ENCODE measurements at regions of chr7 and their contacts with region 1.

Region 1: GRCh38 chr7:332646-333392 is 42.8 kb downstream of the FOXL3 start:
- DNase-seq: peak; percentile 85
- ATAC-seq: peak; percentile 91 to 96

Region 2: DNA sequence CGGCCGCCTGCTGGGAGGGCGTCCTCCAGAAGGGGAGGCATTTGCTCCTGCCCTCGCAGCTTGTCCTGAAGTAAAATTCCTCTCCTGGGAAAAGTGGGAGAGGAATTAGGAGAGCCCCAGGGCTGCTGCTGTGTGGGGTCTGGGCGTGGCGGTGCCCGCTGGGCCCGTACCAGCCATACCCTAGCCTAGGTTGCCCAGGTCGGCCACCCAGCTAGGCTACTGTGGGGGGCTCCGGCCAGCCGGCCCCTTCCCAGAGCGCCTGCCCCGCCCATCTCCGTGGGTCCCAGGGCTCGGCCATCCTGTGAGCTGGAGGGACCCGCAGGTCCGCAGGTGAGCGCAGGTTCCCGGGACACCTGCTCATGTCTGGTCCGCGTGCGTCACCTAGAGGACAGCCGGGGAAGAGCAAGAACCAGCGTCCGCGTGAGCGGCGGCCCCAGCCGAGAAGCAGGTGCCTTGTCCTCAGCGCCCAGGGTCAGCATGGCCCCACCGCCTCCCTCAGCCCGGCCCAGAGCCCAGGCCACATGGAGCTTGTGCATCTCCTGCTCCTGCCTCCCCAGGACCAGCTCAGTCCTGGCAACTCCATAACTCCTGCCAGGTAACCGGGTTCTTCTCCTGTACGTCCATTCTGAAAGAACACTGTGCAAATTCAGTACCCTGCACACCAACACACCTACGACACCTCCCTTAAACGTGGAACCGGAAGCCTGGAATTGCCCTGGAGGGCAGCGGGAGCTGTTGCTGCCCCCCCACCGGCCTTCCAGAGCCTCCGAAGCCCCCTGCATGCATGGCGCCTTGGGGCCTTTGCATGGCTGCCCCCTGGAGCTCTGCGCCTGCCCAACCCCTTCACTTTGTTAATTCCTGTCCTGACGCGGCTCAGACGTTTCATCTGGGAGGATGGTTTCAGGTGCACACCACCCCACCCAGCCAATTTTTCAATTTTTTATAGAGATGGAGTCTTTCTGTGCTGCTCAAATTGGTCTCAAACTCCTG is 65.7 kb before region 1 on chr7:
- intact Hi-C with region 1: no loop called
- DNase-seq: peak; percentile 29
- ATAC-seq: peak; percentile 18 to 27

Region 3: DNA sequence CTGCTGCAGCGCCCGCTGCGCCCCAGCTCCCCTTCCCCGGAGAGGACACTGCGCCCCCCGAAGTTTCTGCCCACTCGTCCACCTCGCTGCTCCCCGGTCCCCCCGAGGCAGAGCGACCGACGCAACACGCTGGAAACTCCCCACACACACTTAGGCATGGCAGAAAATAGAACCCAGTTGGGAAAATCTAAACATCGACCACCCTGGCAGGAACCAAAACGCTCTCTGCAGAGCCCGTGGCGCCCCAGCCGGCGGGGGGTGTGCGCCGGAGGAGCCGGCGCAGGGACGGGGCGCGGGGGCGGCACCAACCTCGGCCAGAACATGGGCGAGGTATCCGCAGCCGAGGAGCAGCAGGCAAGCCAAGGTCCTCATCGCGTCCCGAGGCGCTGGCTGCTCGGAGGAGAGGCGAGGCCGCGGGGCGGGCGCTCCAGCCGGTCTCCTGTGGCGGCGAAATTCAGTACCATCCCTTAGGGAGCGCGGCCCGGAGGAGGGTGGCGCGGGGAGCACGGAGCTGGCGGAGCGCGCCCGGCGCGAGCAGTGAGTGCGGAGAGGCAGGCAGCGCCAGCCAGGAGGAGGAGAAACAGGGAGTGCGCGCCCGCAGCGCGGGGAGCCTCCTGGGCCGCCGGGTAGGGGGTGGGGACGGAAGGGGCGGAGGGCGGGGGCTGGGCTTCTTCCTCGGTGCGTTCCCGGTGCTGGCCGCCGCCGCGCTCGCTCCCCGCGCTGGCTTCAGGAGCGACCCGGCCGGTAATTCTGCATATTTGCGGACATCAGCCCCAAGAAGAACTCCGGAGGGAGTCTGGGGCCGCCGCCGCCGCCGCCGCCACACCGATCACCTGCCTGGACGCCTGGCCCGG is 186.0 kb after region 1 on chr7:
- intact Hi-C with region 1: loop called (anchors 5 to 10 kb)
- DNase-seq: peak; percentile 85
- ATAC-seq: peak; percentile 60 to 61

Region 4: GRCh38 chr7:636396-636795 is 303.6 kb after region 1 on chr7:
- intact Hi-C with region 1: loop called (anchors 5 to 10 kb)
- DNase-seq: no peak
- ATAC-seq: peak; percentile 38 to 54

Region 5: DNA sequence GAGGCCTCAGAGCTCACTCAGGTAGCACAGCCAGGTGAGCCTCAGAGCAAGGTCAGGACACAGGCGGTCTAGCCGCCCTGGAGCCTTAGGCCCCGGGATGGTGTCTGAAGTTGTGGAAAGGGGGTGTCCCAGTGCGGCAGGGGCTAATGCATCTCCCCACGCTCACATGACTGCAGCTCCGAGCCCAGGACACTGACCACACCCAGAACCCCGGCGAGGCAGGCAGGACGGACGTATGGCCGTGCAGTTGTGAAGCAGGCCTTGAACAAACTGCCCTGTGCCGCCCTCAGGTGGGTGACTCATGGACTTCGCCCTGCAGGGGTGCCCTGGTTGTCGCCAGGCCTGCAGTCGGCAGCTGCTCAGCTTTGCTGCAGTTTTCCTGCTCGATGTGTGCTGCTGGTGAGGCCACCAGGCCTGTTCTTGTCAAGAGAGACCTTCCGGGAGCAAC is 399.3 kb after region 1 on chr7:
- intact Hi-C with region 1: loop called in 1 of 2 experiments (anchors 5 kb)
- DNase-seq: peak; percentile 52
- ATAC-seq: peak; percentile 70 to 74